Endothelial cell of umbilical vein (primary cell): ENCODE measurements at regions of chr3 and their contacts with region 1.

Region 1: GRCh38 chr3:8239718-8240695 is 261.6 kb upstream of the LMCD1 start:
- DNase-seq: peak; percentile 62
- H3K4me3 ChIP-seq: no peak overlapping the region
- H3K27ac ChIP-seq: no peak overlapping the region
- H3K4me1 ChIP-seq: no peaks in the 10 kb centered on the region
- H3K27me3 ChIP-seq: no peaks in the 10 kb centered on the region
- CTCF ChIP-seq: peak; percentile 62 to 80
- POLR2A ChIP-seq: no peak

Region 2: DNA sequence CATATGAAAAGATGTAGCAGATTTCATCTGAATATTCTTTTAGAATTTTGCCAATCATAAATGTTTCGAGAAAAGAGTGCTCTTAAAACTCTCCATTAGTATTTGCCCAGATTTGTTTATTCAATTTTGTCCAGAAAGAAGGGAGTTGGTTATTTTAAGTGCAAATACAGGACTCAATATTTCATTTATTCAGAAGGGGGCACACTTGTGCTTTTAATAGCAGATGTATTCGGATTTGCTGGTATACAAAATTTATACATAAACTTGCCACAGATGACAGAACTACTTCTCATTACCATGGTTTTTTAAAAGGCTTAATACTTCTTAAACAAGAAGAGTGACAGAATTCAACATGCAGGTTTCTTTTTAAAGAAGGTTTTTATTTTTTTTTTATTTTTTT is 1448.8 kb before region 1 on chr3:
- CTCF ChIA-PET with region 1: interaction called, 7 read pairs
- POLR2A ChIA-PET with region 1: no interaction called
- dilution Hi-C with region 1: no loop called
- intact Hi-C with region 1: loop called (anchors 1 kb)
- DNase-seq: peak; percentile 17
- H3K4me3 ChIP-seq: no peak overlapping the region
- H3K27ac ChIP-seq: no peak overlapping the region
- H3K4me1 ChIP-seq: no peaks in the 10 kb centered on the region
- H3K27me3 ChIP-seq: no peaks in the 10 kb centered on the region
- CTCF ChIP-seq: no peak
- POLR2A ChIP-seq: no peak

Region 3: GRCh38 chr3:7285505-7285904 is 954.5 kb before region 1 on chr3:
- CTCF ChIA-PET with region 1: no interaction called
- POLR2A ChIA-PET with region 1: no interaction called
- dilution Hi-C with region 1: no loop called
- intact Hi-C with region 1: loop called (anchors 5 kb)
- DNase-seq: peak; percentile 49
- H3K4me3 ChIP-seq: no peak overlapping the region
- H3K27ac ChIP-seq: no peak overlapping the region
- H3K4me1 ChIP-seq: peaks cover 28% of the 10 kb centered on the region
- H3K27me3 ChIP-seq: no peaks in the 10 kb centered on the region
- CTCF ChIP-seq: peak in 1 of 2 donors; percentile 14
- POLR2A ChIP-seq: no peak

Region 4: GRCh38 chr3:8223766-8224165 is 16.2 kb before region 1 on chr3:
- CTCF ChIA-PET with region 1: interaction called, 36 read pairs
- POLR2A ChIA-PET with region 1: no interaction called
- dilution Hi-C with region 1: no loop called
- intact Hi-C with region 1: no loop called
- DNase-seq: no peak
- H3K4me3 ChIP-seq: no peak overlapping the region
- H3K27ac ChIP-seq: no peak overlapping the region
- H3K4me1 ChIP-seq: no peaks in the 10 kb centered on the region
- H3K27me3 ChIP-seq: no peaks in the 10 kb centered on the region
- CTCF ChIP-seq: no peak
- POLR2A ChIP-seq: no peak

Region 5: DNA sequence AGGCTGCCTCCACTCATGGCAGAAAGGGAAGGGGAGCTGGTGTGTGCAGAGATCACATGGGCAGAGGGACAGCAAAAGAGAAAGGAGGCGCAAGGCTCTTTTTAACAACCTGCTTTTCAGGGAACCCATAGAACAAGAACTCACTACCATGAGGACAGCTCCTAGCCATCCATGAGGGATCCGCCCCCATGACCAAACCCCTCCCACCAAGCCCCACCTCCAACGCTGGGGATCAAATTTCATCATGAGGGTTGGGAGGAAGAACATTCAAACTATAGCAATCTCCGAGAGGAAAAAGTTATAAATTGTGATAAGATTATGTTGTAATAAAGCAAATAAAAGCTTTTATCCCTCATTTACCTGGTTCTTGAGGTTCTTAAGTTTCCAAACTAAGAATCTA is 177.0 kb after region 1 on chr3:
- CTCF ChIA-PET with region 1: interaction called, 17 read pairs
- POLR2A ChIA-PET with region 1: no interaction called
- dilution Hi-C with region 1: no loop called
- intact Hi-C with region 1: no loop called
- DNase-seq: peak; percentile 39
- H3K4me3 ChIP-seq: no peak overlapping the region
- H3K27ac ChIP-seq: no peak overlapping the region
- H3K4me1 ChIP-seq: no peaks in the 10 kb centered on the region
- H3K27me3 ChIP-seq: no peaks in the 10 kb centered on the region
- CTCF ChIP-seq: no peak
- POLR2A ChIP-seq: no peak